Activated CD8-positive, alpha-beta T cell treated with anti-CD3 and anti-CD28 coated beads, Interleukin-2, amount 10 ng/mL, durations not matched to agents 7 days and 5 days (primary cell): ENCODE measurements at regions of chr12 and their contacts with region 1.

Region 1: GRCh38 chr12:47837190-47838171 is 17.8 kb upstream of the HDAC7 start:
- DNase-seq: peak; percentile 77
- ATAC-seq: peak; percentile 23
- H3K4me3 Mint-ChIP-seq: peak overlapping the region; percentile 44
- H3K27ac Mint-ChIP-seq: peak overlapping the region; percentile 68
- H3K4me1 Mint-ChIP-seq: peaks cover 61% of the 10 kb centered on the region
- H3K27me3 Mint-ChIP-seq: peaks cover 2% of the 10 kb centered on the region

Region 2: DNA sequence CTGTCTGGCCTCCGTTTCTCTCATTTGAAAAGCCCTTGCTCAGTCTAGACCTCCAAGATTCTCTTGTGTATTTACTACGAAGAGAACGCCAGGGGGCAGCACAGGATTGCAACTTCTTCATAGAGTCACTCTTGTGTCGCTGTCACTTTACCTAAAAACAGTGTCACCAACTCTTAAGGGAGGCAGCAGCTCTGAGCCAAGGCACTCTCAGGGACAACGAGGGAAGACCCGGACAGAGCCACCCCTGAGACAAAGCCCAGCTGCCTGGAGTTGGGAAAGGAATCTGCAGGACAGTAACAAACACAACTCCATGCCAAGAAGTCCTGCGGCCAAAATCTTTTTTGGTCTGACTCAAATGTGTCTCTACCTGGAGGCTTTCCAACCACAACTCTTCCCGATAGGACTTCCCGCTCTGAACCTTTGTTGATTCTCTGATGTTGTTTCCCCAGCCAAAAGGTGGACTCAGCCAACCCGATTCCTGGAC is 122.0 kb before region 1 on chr12:
- CTCF ChIA-PET with region 1: interaction called, 120 read pairs
- POLR2A ChIA-PET with region 1: interaction called, 5 read pairs
- DNase-seq: peak; percentile 90
- ATAC-seq: peak; percentile 88
- H3K4me3 Mint-ChIP-seq: no peak overlapping the region
- H3K27ac Mint-ChIP-seq: peak overlapping the region; percentile 37
- H3K4me1 Mint-ChIP-seq: peaks cover 37% of the 10 kb centered on the region
- H3K27me3 Mint-ChIP-seq: no peaks in the 10 kb centered on the region

Region 3: DNA sequence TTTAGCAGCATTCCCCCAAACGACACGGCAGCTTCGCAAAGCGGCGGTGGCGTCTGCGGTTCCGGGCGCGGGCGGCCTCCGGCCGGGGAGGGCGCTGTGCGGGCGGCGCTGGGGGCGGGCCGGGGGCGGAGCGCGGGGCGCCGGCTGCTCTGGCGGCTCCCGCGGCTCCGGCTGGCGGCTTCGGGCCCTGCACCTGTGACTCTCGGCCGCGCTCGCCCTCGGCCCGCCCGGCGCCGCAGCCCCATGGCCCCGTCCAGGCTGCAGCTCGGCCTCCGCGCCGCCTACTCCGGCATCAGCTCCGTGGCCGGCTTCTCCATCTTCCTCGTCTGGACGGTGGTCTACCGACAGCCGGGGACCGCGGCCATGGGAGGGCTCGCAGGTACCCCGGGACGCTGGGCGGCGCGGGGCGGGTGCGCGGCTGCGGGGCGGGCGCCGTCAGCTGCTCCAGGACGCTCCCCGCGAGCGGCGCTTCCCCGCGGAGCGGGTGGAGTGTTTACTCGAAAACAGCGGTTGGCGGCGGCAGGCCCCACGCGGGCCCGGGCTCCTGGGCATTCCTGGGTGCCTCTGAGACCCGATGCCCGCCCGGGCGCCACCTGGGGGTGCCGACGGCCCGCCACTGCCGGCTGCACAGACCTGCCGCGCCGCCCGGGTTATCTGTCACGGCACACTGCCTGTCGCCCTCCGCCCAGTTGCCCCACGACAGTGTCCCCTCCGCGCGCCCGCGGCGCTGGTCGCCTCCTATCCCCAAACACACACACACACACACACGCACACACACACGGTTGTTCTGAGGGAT is 64.2 kb before region 1 on chr12 and contains the start of gene SLC48A1:
- CTCF ChIA-PET with region 1: interaction called, 147 read pairs
- POLR2A ChIA-PET with region 1: interaction called, 3 read pairs
- DNase-seq: peak; percentile 73
- ATAC-seq: peak; percentile 88
- H3K4me3 Mint-ChIP-seq: peak within 1 kb of the TSS; percentile 87
- H3K27ac Mint-ChIP-seq: peak within 1 kb of the TSS; percentile 66
- H3K4me1 Mint-ChIP-seq: peaks cover 40% of the 10 kb centered on the region
- H3K27me3 Mint-ChIP-seq: peaks cover 7% of the 10 kb centered on the region
- total RNA-seq, gene SLC48A1: 7.0 to 8.1 TPM

Region 4: GRCh38 chr12:47812797-47813510 is 24.5 kb before region 1 on chr12:
- CTCF ChIA-PET with region 1: interaction called, 1,049 read pairs
- POLR2A ChIA-PET with region 1: interaction called, 642 read pairs
- DNase-seq: peak; percentile 96
- ATAC-seq: peak; percentile 61
- H3K4me3 Mint-ChIP-seq: peak overlapping the region; percentile 90
- H3K27ac Mint-ChIP-seq: peak overlapping the region; percentile 90
- H3K4me1 Mint-ChIP-seq: peaks cover 97% of the 10 kb centered on the region
- H3K27me3 Mint-ChIP-seq: no peaks in the 10 kb centered on the region

Region 5: DNA sequence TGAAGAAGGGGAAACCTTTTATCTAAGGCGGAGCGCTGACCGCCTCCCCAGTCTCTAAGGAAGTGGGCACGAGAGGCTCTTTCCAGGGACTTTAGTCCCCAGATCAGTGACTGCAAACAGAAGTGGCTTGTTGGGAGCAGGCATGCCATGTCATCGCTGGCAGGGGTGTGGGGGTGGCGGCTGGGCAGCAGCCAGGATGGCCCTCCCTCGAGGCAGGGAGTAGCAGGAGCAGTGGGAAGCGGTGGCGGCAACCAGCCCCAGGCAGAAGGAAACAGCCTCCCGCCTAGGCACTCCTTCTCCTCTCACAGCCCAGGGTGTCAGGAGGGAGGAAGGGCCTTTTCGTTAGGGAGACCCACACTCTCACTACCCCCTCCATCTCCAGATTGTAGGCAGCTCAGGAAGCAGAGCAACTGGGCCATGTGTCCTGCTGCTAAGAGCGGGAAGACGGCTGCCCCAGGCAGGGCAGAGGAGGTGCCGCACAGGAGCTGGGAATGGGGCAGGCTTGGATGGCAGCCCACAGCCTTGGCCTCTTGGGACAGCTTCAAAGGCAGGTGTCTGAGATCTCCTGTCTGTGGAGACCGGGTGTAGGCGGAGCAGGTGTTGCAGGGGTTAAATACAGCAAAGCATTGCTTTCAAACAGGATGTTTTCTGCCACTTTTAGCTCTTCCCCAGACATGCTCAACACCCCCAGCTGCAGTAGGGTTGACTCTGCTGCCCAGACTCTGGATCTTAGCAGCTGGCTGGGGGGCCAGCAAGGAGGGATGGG is 45.5 kb after region 1 on chr12:
- CTCF ChIA-PET with region 1: interaction called, 65 read pairs
- POLR2A ChIA-PET with region 1: interaction called, 5 read pairs
- DNase-seq: peak; percentile 63
- ATAC-seq: peak; percentile 51
- H3K4me3 Mint-ChIP-seq: peak overlapping the region; percentile 73
- H3K27ac Mint-ChIP-seq: peak overlapping the region; percentile 91
- H3K4me1 Mint-ChIP-seq: peaks cover 71% of the 10 kb centered on the region
- H3K27me3 Mint-ChIP-seq: no peaks in the 10 kb centered on the region